ENCODE measurements at regions of chr10 and their contacts with region 1.

Region 1: GRCh38 chr10:46516660-46517416 is 39.6 kb downstream of the GPRIN2 start:
- DNase-seq: peak; percentile 90
- H3K4me3 ChIP-seq: no peak overlapping the region
- H3K27ac ChIP-seq: peak overlapping the region; percentile 83
- H3K27me3 ChIP-seq: no peaks in the 10 kb centered on the region
- CTCF ChIP-seq: no peak

Region 2: DNA sequence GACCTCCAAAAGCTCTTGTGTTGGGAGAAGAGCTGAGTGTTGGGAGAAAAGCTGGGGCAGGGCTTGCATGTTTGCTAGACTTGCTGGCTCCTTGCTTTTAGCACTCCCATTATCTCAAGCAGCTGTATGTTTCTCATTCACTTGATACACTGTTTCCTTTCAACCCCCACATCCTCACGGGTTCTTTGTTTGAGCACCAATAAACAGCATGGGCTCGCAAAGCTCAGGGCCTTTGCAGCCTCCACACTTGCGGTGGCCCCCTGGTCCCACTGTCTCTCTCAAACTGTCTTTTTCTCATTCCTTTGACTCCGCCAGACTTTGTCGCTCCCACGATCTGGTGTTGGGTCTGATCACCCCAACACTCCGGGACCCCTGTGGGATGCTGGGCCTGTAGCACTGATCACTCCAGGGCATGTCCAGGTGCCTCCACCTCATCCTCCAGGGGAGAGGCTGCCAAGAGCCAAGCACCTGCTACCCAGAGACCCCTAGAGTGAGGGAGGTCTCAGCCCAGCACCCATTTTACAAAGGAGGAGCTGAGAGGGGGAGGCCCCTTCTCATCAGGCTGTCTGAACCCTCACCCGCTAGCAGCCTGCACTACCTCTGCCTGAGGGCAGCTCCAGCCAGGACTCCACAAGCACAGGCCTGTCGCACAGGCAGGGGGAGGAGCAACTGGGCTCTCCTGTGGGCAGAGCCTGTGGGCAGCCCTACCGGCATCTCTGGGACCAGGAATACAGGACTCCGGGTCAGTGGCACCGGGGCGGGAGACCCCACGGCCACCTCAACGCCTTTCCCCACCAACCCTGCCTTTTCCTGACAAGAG is 421.7 kb before region 1 on chr10:
- CTCF ChIA-PET with region 1: no interaction called
- POLR2A ChIA-PET with region 1: interaction called, 10 read pairs
- DNase-seq: no peak
- H3K4me3 ChIP-seq: no peak overlapping the region
- H3K27ac ChIP-seq: no peak overlapping the region
- H3K27me3 ChIP-seq: no peaks in the 10 kb centered on the region
- CTCF ChIP-seq: no peak

Region 3: DNA sequence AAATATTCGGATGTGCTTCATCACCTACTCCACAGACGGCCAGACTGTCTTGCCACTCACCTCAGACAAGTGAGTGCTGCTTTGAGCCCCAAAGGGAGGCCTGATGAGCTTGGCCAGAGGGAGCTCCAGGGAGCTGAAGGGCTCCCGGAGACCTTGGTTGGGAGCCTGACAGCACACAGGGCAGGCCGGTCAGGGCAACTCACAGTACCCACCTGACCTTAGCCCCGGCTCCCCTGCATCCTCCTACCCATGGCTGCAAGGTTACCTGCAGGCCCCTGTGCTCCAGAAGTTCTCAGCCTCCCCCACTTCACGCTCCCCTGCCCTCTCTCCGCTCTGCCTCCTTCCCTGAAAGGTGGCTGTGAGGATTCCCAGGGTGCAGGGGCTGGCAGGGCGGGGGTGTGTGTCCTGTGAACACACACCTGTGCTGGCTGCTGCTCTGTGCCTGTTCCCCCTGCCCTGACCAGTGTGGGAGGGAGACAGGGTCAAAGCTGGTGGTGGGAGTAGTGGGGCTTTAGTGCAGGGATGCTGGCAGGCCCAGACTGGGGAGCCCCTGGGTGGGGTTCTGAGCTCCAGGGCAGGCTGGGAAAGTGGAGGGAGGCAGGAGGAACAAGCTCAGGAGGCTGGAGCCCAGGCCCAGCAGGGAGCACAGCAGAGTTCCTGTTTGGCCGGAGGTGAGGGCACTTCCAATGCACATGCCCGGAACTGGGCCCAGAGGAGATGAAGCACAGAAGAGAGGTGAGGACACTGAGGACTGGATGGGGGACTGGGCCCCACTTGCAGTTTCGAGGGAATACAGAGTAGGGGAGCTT is 222.8 kb before region 1 on chr10:
- CTCF ChIA-PET with region 1: no interaction called
- POLR2A ChIA-PET with region 1: no interaction called
- DNase-seq: no peak
- H3K4me3 ChIP-seq: no peak overlapping the region
- H3K27ac ChIP-seq: no peak overlapping the region
- H3K27me3 ChIP-seq: no peaks in the 10 kb centered on the region
- CTCF ChIP-seq: peak; percentile 23; the same call in 1 of the 2 replicates

Region 4: DNA sequence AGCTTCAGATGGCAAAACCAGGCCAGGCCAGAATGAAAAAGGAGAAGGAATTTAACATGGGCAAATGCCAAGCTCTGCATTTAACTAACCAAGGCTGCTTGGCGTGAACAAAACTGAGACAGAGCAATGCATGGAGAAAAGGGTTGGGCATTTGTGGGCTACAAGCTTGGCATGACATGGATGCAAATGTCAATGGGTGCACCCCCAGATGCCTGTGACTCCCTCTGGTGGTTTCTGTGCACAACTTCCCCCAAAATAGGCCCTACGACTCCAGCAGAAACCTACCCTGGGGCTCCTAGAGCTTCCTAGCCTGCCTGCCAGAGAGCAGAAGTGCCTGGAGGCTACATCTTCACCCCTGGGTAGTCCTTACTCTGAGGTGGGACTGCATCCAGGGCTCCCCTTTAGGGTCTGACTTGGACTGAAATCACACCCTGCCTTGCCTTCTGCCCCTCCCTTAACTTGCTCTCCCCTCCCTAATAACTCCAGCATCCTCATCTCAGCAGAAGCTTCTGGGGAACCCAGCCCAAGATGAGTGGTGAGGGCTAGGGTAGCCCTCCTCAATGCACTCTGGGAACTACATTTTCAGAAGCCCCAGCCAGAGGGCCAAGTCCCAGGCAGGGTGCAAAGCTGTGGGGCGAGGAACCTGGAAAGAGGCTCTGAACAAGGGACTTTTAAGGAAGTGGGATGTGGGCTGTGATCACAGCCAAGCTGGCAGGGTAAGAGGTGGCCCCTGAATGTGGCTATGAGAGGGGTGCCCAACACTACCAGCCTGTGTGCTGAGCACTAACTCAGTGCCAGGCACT is 28.4 kb after region 1 on chr10:
- CTCF ChIA-PET with region 1: interaction called, 11 read pairs
- POLR2A ChIA-PET with region 1: interaction called, 3 read pairs
- DNase-seq: no peak
- H3K4me3 ChIP-seq: no peak overlapping the region
- H3K27ac ChIP-seq: no peak overlapping the region
- H3K27me3 ChIP-seq: peaks cover 15% of the 10 kb centered on the region
- CTCF ChIP-seq: peak; percentile 61

Measured in AG04450 (cell line).